ENCODE measurements at regions of chr1 and their contacts with region 1.

Region 1: GRCh38 chr1:24391882-24392603 is 21.5 kb downstream of the STPG1 start:
- DNase-seq: peak; percentile 79
- ATAC-seq: peak; percentile 80
- H3K4me3 ChIP-seq: peak overlapping the region; percentile 60
- H3K27ac ChIP-seq: peak overlapping the region; percentile 75
- H3K4me1 ChIP-seq: peaks cover 37% of the 10 kb centered on the region
- H3K27me3 ChIP-seq: no peaks in the 10 kb centered on the region
- CTCF ChIP-seq: peak; percentile 92

Region 2: DNA sequence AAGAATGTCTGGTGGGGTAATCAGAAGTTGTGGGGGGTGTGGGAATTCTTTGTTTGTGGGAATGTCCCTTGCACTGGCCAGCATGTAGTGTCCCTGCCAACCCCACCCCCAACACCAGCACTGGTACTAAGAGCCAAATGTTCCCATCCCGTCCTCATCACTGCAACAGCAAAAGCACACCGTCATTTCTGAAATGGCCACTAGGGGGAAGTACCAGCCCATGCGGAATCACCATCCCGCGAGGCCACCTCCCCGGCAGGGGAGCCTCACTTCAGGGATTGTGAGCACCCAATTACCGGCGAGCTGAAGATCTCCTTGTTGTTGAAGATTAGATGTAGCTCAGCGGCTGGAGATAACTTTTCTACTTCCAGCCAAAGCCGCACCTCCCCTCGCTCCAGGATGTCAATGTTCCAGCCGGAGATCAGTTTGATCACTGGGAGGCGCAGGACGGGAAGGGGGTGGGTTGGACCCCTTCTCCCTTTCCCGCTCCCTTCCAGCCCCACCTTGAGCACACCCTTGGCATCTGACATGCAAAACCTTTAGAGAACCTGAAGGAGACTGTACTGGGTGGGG is 321.1 kb before region 1 on chr1:
- CTCF ChIA-PET with region 1: no interaction called
- POLR2A ChIA-PET with region 1: no interaction called
- intact Hi-C with region 1: loop called (anchors 5 kb)
- DNase-seq: peak; percentile 94
- ATAC-seq: peak; percentile 97
- H3K4me3 ChIP-seq: no peak overlapping the region
- H3K27ac ChIP-seq: no peak overlapping the region
- H3K4me1 ChIP-seq: peaks cover 3% of the 10 kb centered on the region; the same call in 1 of the 2 replicates
- H3K27me3 ChIP-seq: no peaks in the 10 kb centered on the region
- CTCF ChIP-seq: peak; percentile 94

Region 3: GRCh38 chr1:24201941-24202440 is 190.1 kb before region 1 on chr1:
- CTCF ChIA-PET with region 1: interaction called, 64 read pairs
- POLR2A ChIA-PET with region 1: interaction called, 11 read pairs
- intact Hi-C with region 1: loop called (anchors 1 kb)
- DNase-seq: peak; percentile 97
- ATAC-seq: peak; percentile 83
- H3K4me3 ChIP-seq: no peak overlapping the region
- H3K27ac ChIP-seq: peak overlapping the region; percentile 88
- H3K4me1 ChIP-seq: peaks cover 33% of the 10 kb centered on the region
- H3K27me3 ChIP-seq: no peaks in the 10 kb centered on the region
- CTCF ChIP-seq: peak; percentile 89

Region 4: GRCh38 chr1:24266398-24266941 is 125.6 kb before region 1 on chr1:
- CTCF ChIA-PET with region 1: no interaction called
- POLR2A ChIA-PET with region 1: no interaction called
- intact Hi-C with region 1: loop called (anchors 1 kb)
- DNase-seq: peak; percentile 99
- ATAC-seq: peak; percentile 91
- H3K4me3 ChIP-seq: no peak overlapping the region
- H3K27ac ChIP-seq: peak overlapping the region; percentile 84
- H3K4me1 ChIP-seq: peaks cover 20% of the 10 kb centered on the region
- H3K27me3 ChIP-seq: no peaks in the 10 kb centered on the region
- CTCF ChIP-seq: peak; percentile 50

Region 5: GRCh38 chr1:24319312-24319863 is 72.7 kb before region 1 on chr1 and contains the start of gene GRHL3:
- CTCF ChIA-PET with region 1: interaction called, 3 read pairs
- POLR2A ChIA-PET with region 1: no interaction called
- intact Hi-C with region 1: loop called (anchors 2 kb)
- DNase-seq: peak; percentile 75
- ATAC-seq: peak; percentile 57
- H3K4me3 ChIP-seq: peak within 1 kb of the TSS; percentile 61
- H3K27ac ChIP-seq: peak within 1 kb of the TSS; percentile 55
- H3K4me1 ChIP-seq: peaks cover 72% of the 10 kb centered on the region
- H3K27me3 ChIP-seq: no peaks in the 10 kb centered on the region
- CTCF ChIP-seq: no peak
- total RNA-seq, gene GRHL3: 3.5 and 7.8 TPM in 2 replicates

Region 6: GRCh38 chr1:24351918-24352627 is 40.0 kb before region 1 on chr1:
- CTCF ChIA-PET with region 1: no interaction called
- POLR2A ChIA-PET with region 1: no interaction called
- intact Hi-C with region 1: no loop called
- DNase-seq: peak; percentile 77
- ATAC-seq: peak; percentile 48
- H3K4me3 ChIP-seq: no peak overlapping the region
- H3K27ac ChIP-seq: no peak overlapping the region
- H3K4me1 ChIP-seq: peaks cover 28% of the 10 kb centered on the region
- H3K27me3 ChIP-seq: no peaks in the 10 kb centered on the region
- CTCF ChIP-seq: no peak

Region 7: DNA sequence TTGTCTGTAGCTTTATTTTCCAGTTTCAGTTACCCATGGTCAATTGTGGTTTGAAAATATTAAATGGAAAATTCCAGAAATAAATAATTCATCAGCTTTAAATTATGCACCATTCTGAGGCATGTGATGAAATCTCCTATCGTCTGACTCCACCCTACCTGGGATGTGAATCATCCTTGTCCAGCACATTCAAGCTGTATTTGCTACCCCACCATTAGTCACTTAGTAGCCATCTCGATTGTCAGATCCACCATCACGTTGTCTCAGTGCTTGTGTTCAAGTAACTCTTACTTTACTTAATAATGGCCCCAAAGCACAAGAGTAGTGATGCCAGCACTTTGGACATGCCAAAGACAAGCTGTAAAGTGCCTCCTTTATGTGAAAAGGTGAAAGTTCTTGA is 17.5 kb after region 1 on chr1:
- CTCF ChIA-PET with region 1: interaction called, 12 read pairs
- POLR2A ChIA-PET with region 1: interaction called, 3 read pairs
- intact Hi-C with region 1: loop called (anchors 2 kb)
- DNase-seq: peak; percentile 91
- ATAC-seq: peak; percentile 66
- H3K4me3 ChIP-seq: no peak overlapping the region
- H3K27ac ChIP-seq: peak overlapping the region; percentile 73
- H3K4me1 ChIP-seq: peaks cover 45% of the 10 kb centered on the region
- H3K27me3 ChIP-seq: no peaks in the 10 kb centered on the region
- CTCF ChIP-seq: no peak

Region 8: DNA sequence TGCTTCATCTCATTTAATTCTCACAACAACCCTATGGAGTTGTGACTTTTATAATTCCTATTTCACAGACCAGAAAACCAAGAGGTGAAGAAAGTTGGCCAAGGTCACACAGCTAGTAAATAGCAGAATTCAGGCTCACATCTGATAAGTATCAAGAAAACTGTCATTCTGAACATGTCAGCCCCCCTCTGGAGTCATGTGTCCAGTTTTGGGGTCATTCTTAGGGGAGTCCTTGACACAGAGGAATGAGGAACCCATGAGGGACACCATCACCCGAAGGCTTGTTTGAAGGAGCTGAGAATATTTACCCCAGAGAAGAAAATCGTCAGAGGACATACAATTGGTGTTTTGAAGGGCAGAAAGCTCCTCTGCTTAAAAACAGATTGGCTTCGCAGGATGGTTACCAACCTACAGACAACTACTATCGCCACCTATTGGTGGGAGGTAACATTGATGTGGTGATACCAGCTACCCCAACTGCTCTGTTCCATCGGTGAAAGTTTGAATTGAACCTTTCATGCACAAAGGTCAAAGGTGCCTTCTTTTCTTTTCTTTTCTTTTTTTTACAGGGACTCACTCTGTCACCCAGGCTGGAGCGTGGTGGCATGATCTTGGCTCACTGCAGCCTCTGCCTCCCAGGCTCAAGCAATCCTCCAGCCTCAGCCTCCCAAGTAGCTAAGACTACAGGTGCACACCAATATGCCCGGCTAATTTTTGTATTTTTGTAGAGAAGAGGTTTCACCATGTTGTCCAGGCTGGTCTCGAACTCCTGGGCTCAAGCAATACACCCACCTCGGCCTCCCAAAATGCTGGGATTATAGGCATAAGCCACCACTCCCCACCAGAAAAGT is 195.2 kb after region 1 on chr1:
- CTCF ChIA-PET with region 1: no interaction called
- POLR2A ChIA-PET with region 1: no interaction called
- intact Hi-C with region 1: loop called (anchors 1 kb)
- DNase-seq: peak; percentile 73
- ATAC-seq: peak; percentile 84
- H3K4me3 ChIP-seq: no peak overlapping the region
- H3K27ac ChIP-seq: no peak overlapping the region
- H3K4me1 ChIP-seq: no peaks in the 10 kb centered on the region; the same call in 1 of the 2 replicates
- H3K27me3 ChIP-seq: no peaks in the 10 kb centered on the region
- CTCF ChIP-seq: peak; percentile 82

Measured in PC-3 (cell line).